Activated B cell treated with CpG ODN at 0.5 μM for 24 hours (primary cell): ENCODE measurements at regions of chr3 and their contacts with region 1.

Region 1: DNA sequence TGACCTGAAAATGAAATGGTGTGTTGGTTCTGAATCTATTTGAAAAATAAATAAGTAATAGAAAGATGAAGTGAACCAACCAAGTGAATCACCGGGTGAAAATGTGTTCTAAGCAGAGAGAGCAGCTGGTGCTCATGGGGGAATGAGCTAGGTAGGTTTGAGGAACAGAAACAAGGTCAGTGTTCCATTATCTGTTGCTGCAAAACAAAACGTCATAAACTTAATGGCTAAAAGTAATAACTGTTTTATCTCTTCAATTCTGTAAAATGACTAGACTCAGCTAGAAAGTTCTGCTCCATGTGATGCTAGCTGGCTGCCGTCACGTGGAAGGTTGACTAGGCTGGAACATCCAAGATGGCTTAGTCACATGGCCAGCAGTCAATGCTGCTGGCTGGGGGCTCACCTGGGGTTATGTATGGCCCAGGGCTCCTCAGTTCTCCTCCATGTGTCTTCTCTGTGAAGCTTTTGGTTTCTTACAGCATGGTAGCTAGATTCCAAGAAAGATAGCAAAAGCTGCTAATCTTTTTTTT is 13.3 kb upstream of the SH3BP5 start:
- DNase-seq: peak; percentile 53
- ATAC-seq: peak; percentile 90
- H3K4me3 Mint-ChIP-seq: peak overlapping the region; percentile 59
- H3K27ac Mint-ChIP-seq: peak overlapping the region; percentile 98
- H3K4me1 Mint-ChIP-seq: peaks cover 84% of the 10 kb centered on the region
- H3K27me3 Mint-ChIP-seq: no peaks in the 10 kb centered on the region
- CTCF ChIP-seq: no peak

Region 2: GRCh38 chr3:15319575-15319974 is 26.1 kb before region 1 on chr3:
- CTCF ChIA-PET with region 1: no interaction called
- POLR2A ChIA-PET with region 1: interaction called, 12 read pairs
- intact Hi-C with region 1: no loop called
- DNase-seq: no peak
- ATAC-seq: no peak
- H3K4me3 Mint-ChIP-seq: no peak overlapping the region
- H3K27ac Mint-ChIP-seq: peak overlapping the region; percentile 65
- H3K4me1 Mint-ChIP-seq: peaks cover 92% of the 10 kb centered on the region
- H3K27me3 Mint-ChIP-seq: no peaks in the 10 kb centered on the region
- CTCF ChIP-seq: no peak

Region 3: DNA sequence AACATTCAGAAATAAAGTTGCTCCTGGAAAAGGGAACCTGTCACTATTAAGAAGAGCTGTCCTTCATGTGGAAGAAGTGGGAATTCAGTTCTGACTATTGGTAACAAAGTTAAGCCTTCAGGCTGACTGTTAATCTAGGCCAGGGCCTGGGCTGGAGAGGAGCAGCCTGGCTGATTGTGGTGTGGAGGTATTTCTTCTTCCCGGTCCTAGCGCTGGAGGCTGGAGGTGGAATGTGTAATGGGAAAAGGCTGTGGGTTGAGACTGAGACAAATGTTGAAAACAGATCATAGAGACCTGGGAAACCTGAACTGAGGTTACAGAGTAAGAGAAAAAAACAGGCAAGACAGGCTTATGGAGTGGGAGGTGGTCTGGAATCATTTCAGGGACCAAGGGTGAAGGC is 10.5 kb after region 1 on chr3:
- CTCF ChIA-PET with region 1: interaction called, 8 read pairs
- POLR2A ChIA-PET with region 1: interaction called, 49 read pairs
- intact Hi-C with region 1: loop called (anchors 1 kb)
- DNase-seq: no peak
- ATAC-seq: no peak
- H3K4me3 Mint-ChIP-seq: peak overlapping the region; percentile 71
- H3K27ac Mint-ChIP-seq: peak overlapping the region; percentile 88
- H3K4me1 Mint-ChIP-seq: peaks cover 52% of the 10 kb centered on the region
- H3K27me3 Mint-ChIP-seq: no peaks in the 10 kb centered on the region
- CTCF ChIP-seq: no peak

Region 4: GRCh38 chr3:15361494-15362212 is 16.0 kb after region 1 on chr3:
- CTCF ChIA-PET with region 1: interaction called, 8 read pairs
- POLR2A ChIA-PET with region 1: interaction called, 49 read pairs
- intact Hi-C with region 1: loop called (anchors 1 kb)
- DNase-seq: peak; percentile 44
- ATAC-seq: peak; percentile 70
- H3K4me3 Mint-ChIP-seq: peak overlapping the region; percentile 64
- H3K27ac Mint-ChIP-seq: peak overlapping the region; percentile 74
- H3K4me1 Mint-ChIP-seq: peaks cover 65% of the 10 kb centered on the region
- H3K27me3 Mint-ChIP-seq: no peaks in the 10 kb centered on the region
- CTCF ChIP-seq: no peak

Region 5: GRCh38 chr3:15377961-15378791 is 32.5 kb after region 1 on chr3:
- CTCF ChIA-PET with region 1: interaction called, 5 read pairs
- POLR2A ChIA-PET with region 1: interaction called, 14 read pairs
- intact Hi-C with region 1: loop called (anchors 1 kb)
- DNase-seq: peak; percentile 88
- ATAC-seq: peak; percentile 94
- H3K4me3 Mint-ChIP-seq: peak overlapping the region; percentile 44
- H3K27ac Mint-ChIP-seq: peak overlapping the region; percentile 91
- H3K4me1 Mint-ChIP-seq: peaks cover 29% of the 10 kb centered on the region
- H3K27me3 Mint-ChIP-seq: no peaks in the 10 kb centered on the region
- CTCF ChIP-seq: no peak

Region 6: GRCh38 chr3:15384510-15385237 is 39.0 kb after region 1 on chr3:
- CTCF ChIA-PET with region 1: interaction called, 3 read pairs
- POLR2A ChIA-PET with region 1: interaction called, 14 read pairs
- intact Hi-C with region 1: loop called (anchors 1 kb)
- DNase-seq: no peak
- ATAC-seq: peak; percentile 90
- H3K4me3 Mint-ChIP-seq: peak overlapping the region; percentile 71
- H3K27ac Mint-ChIP-seq: peak overlapping the region; percentile 95
- H3K4me1 Mint-ChIP-seq: peaks cover 79% of the 10 kb centered on the region
- H3K27me3 Mint-ChIP-seq: no peaks in the 10 kb centered on the region
- CTCF ChIP-seq: no peak

Region 7: GRCh38 chr3:15815696-15816095 is 470.0 kb after region 1 on chr3:
- CTCF ChIA-PET with region 1: no interaction called
- POLR2A ChIA-PET with region 1: no interaction called
- intact Hi-C with region 1: no loop called
- DNase-seq: no peak
- ATAC-seq: no peak
- H3K4me3 Mint-ChIP-seq: no peak overlapping the region
- H3K27ac Mint-ChIP-seq: no peak overlapping the region
- H3K4me1 Mint-ChIP-seq: peaks cover 28% of the 10 kb centered on the region
- H3K27me3 Mint-ChIP-seq: no peaks in the 10 kb centered on the region
- CTCF ChIP-seq: no peak